ENCODE measurements at regions of chr5 and their contacts with region 1.

Region 1: DNA sequence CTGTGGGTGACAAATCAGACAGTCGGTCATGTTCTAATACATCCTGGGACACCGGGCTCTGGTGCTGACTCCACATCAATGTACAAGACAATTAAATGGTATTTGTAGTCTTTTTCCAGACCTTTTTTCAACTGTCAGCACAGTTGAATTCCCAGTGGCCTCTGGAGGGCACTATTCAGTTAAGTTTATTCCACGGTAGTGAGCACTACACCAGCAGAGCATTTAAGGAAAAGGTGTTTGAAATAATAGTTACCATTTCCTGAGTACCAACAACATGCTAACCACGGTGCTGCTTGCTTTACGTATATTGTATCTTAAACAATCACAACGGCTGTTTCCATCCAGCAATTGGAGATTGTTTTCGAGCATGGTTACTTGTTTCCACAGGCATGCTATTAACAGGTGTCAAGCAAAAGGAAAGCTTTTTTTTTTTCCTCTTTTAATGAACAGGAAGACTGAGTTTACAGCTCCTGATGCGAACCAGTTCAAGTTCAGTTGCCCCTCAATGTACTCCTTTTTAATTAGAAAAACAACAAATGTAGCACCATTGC is 186.7 kb downstream of the PDZD2 start:
- DNase-seq: peak; percentile 72
- H3K4me3 ChIP-seq: no peak overlapping the region
- H3K27ac ChIP-seq: no peak overlapping the region
- H3K4me1 ChIP-seq: no peaks in the 10 kb centered on the region
- H3K27me3 ChIP-seq: no peaks in the 10 kb centered on the region
- CTCF ChIP-seq: peak; percentile 58 to 64
- POLR2A ChIP-seq: no peak

Region 2: GRCh38 chr5:31581498-31582099 is 244.0 kb before region 1 on chr5:
- CTCF ChIA-PET with region 1: no interaction called
- POLR2A ChIA-PET with region 1: no interaction called
- dilution Hi-C with region 1: no loop called
- intact Hi-C with region 1: loop called (anchors 1 kb)
- DNase-seq: peak; percentile 32
- H3K4me3 ChIP-seq: no peak overlapping the region
- H3K27ac ChIP-seq: no peak overlapping the region
- H3K4me1 ChIP-seq: no peaks in the 10 kb centered on the region
- H3K27me3 ChIP-seq: peaks cover 0 to 2% of the 10 kb centered on the region in 2 experiments
- CTCF ChIP-seq: peak; percentile 8 to 14
- POLR2A ChIP-seq: no peak

Region 3: GRCh38 chr5:31741496-31741895 is 84.1 kb before region 1 on chr5:
- CTCF ChIA-PET with region 1: no interaction called
- POLR2A ChIA-PET with region 1: no interaction called
- dilution Hi-C with region 1: no loop called
- intact Hi-C with region 1: no loop called
- DNase-seq: no peak
- H3K4me3 ChIP-seq: no peak overlapping the region
- H3K27ac ChIP-seq: no peak overlapping the region
- H3K4me1 ChIP-seq: no peaks in the 10 kb centered on the region
- H3K27me3 ChIP-seq: no peaks in the 10 kb centered on the region
- CTCF ChIP-seq: no peak
- POLR2A ChIP-seq: no peak

Region 4: DNA sequence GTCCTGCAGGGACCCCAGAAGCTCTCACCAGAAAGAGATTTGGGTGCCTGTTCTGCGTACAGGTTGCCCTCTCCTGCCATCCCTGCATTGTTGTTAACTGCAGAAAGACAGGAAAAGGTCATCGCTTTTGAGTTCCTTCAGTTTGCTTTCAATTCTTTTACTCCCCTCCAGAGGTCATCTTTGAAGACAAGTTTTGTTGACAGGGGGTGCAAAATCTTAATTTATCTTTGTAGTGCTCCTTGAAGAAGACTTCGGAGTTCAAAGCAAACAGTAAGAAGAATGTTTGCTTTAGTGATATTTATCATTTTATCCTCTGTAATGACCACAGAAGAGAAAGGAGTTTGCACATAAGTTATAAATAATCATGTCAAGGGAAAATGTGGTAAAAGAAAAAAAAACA is 13.4 kb after region 1 on chr5:
- CTCF ChIA-PET with region 1: interaction called, 12 read pairs
- POLR2A ChIA-PET with region 1: no interaction called
- dilution Hi-C with region 1: no loop called
- intact Hi-C with region 1: no loop called
- DNase-seq: no peak
- H3K4me3 ChIP-seq: no peak overlapping the region
- H3K27ac ChIP-seq: no peak overlapping the region
- H3K4me1 ChIP-seq: no peaks in the 10 kb centered on the region
- H3K27me3 ChIP-seq: no peaks in the 10 kb centered on the region
- CTCF ChIP-seq: no peak
- POLR2A ChIP-seq: no peak

Region 5: GRCh38 chr5:32027717-32028321 is 202.2 kb after region 1 on chr5:
- CTCF ChIA-PET with region 1: no interaction called
- POLR2A ChIA-PET with region 1: no interaction called
- dilution Hi-C with region 1: no loop called
- intact Hi-C with region 1: no loop called
- DNase-seq: peak; percentile 35
- H3K4me3 ChIP-seq: peak overlapping the region in 1 of 3 experiments; percentile 19
- H3K27ac ChIP-seq: peak overlapping the region; percentile 34
- H3K4me1 ChIP-seq: peaks cover 38% of the 10 kb centered on the region
- H3K27me3 ChIP-seq: no peaks in the 10 kb centered on the region
- CTCF ChIP-seq: no peak
- POLR2A ChIP-seq: no peak

Region 6: GRCh38 chr5:32241034-32241783 is 415.6 kb after region 1 on chr5:
- CTCF ChIA-PET with region 1: no interaction called
- POLR2A ChIA-PET with region 1: no interaction called
- dilution Hi-C with region 1: no loop called
- intact Hi-C with region 1: no loop called
- DNase-seq: no peak
- H3K4me3 ChIP-seq: no peak overlapping the region
- H3K27ac ChIP-seq: no peak overlapping the region
- H3K4me1 ChIP-seq: no peaks in the 10 kb centered on the region
- H3K27me3 ChIP-seq: no peaks in the 10 kb centered on the region
- CTCF ChIP-seq: no peak
- POLR2A ChIP-seq: no peak

Region 7: DNA sequence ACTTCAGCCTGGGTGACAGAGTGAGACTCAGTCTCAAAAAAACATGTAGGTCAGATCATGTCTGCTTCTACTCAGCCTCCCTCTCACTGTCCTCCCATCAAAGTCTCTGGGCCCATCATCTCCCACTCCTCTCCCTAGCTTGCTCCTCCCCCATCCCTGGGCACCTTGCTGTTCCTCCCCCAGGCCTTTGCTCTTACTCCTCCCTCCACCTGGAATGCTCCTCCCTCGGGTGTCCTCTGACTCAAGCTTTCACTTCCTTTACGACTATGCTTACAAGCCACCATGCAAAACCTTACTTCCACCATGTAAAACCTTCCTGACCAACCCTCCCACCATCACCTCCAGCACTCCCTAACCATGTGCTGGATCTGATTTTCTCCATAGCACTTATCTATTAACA is 435.6 kb after region 1 on chr5:
- CTCF ChIA-PET with region 1: no interaction called
- POLR2A ChIA-PET with region 1: no interaction called
- dilution Hi-C with region 1: no loop called
- intact Hi-C with region 1: no loop called
- DNase-seq: no peak
- H3K4me3 ChIP-seq: no peak overlapping the region
- H3K27ac ChIP-seq: no peak overlapping the region
- H3K4me1 ChIP-seq: peaks cover 3% of the 10 kb centered on the region
- H3K27me3 ChIP-seq: no peaks in the 10 kb centered on the region
- CTCF ChIP-seq: no peak
- POLR2A ChIP-seq: no peak

Region 8: GRCh38 chr5:32329308-32329834 is 503.8 kb after region 1 on chr5:
- CTCF ChIA-PET with region 1: interaction called, 4 read pairs
- POLR2A ChIA-PET with region 1: no interaction called
- dilution Hi-C with region 1: no loop called
- intact Hi-C with region 1: loop called (anchors 1 kb)
- DNase-seq: peak; percentile 80
- H3K4me3 ChIP-seq: no peak overlapping the region
- H3K27ac ChIP-seq: no peak overlapping the region
- H3K4me1 ChIP-seq: no peaks in the 10 kb centered on the region
- H3K27me3 ChIP-seq: no peaks in the 10 kb centered on the region
- CTCF ChIP-seq: peak; percentile 60 to 80
- POLR2A ChIP-seq: no peak